OCI-LY7 (cell line): ENCODE measurements at regions of chr12 and their contacts with region 1.

Region 1: GRCh38 chr12:42277396-42278127 is 39.5 kb upstream of the YAF2 start:
- DNase-seq: no peak
- H3K4me3 ChIP-seq: no peak overlapping the region
- H3K27ac ChIP-seq: no peak overlapping the region
- H3K4me1 ChIP-seq: no peaks in the 10 kb centered on the region
- CTCF ChIP-seq: no peak

Region 2: GRCh38 chr12:42631513-42631912 is 354.0 kb after region 1 on chr12:
- CTCF ChIA-PET with region 1: no interaction called
- POLR2A ChIA-PET with region 1: interaction called, 11 read pairs
- intact Hi-C with region 1: no loop called
- DNase-seq: no peak
- H3K4me3 ChIP-seq: no peak overlapping the region
- H3K27ac ChIP-seq: no peak overlapping the region
- H3K4me1 ChIP-seq: no peaks in the 10 kb centered on the region
- CTCF ChIP-seq: no peak